H1 (cell line): ENCODE measurements at regions of chr20 and their contacts with region 1.

Region 1: GRCh38 chr20:50101281-50101680 is 11.7 kb downstream of the UBE2V1 start:
- DNase-seq: no peak
- H3K4me3 ChIP-seq: no peak overlapping the region
- H3K27ac ChIP-seq: no peak overlapping the region
- H3K4me1 ChIP-seq: peaks cover 0 to 11% (median 8%) of the 10 kb centered on the region in 4 experiments; a peak in 5 of 7 replicates
- H3K27me3 ChIP-seq: no peaks in the 10 kb centered on the region
- CTCF ChIP-seq: no peak
- EP300 ChIP-seq: no peak
- POLR2A ChIP-seq: no peak
- RAD21 ChIP-seq: no peak

Region 2: GRCh38 chr20:49635166-49635565 is 466.1 kb before region 1 on chr20:
- CTCF ChIA-PET with region 1: no interaction called
- POLR2A ChIA-PET with region 1: no interaction called
- DNase-seq: no peak
- H3K4me3 ChIP-seq: no peak overlapping the region
- H3K27ac ChIP-seq: no peak overlapping the region
- H3K4me1 ChIP-seq: peaks cover 5 to 20% (median 12%) of the 10 kb centered on the region in 4 experiments
- H3K27me3 ChIP-seq: no peaks in the 10 kb centered on the region
- CTCF ChIP-seq: no peak
- EP300 ChIP-seq: no peak
- POLR2A ChIP-seq: no peak
- RAD21 ChIP-seq: no peak

Region 3: GRCh38 chr20:50085452-50086365 is 15.6 kb before region 1 on chr20:
- CTCF ChIA-PET with region 1: interaction called, 32 read pairs
- POLR2A ChIA-PET with region 1: interaction called, 5 read pairs
- DNase-seq: no peak
- H3K4me3 ChIP-seq: no peak overlapping the region
- H3K27ac ChIP-seq: no peak overlapping the region; the same call in 1 of the 2 replicates
- H3K4me1 ChIP-seq: peaks cover 0 to 13% (median 6%) of the 10 kb centered on the region in 4 experiments
- H3K27me3 ChIP-seq: no peaks in the 10 kb centered on the region; a peak in 1 of 7 replicates
- CTCF ChIP-seq: peak; percentile 38 to 83 (median 72)
- EP300 ChIP-seq: no peak
- POLR2A ChIP-seq: no peak
- RAD21 ChIP-seq: peak; percentile 79 to 88